ENCODE measurements at regions of chr3 and their contacts with region 1.

Region 1: DNA sequence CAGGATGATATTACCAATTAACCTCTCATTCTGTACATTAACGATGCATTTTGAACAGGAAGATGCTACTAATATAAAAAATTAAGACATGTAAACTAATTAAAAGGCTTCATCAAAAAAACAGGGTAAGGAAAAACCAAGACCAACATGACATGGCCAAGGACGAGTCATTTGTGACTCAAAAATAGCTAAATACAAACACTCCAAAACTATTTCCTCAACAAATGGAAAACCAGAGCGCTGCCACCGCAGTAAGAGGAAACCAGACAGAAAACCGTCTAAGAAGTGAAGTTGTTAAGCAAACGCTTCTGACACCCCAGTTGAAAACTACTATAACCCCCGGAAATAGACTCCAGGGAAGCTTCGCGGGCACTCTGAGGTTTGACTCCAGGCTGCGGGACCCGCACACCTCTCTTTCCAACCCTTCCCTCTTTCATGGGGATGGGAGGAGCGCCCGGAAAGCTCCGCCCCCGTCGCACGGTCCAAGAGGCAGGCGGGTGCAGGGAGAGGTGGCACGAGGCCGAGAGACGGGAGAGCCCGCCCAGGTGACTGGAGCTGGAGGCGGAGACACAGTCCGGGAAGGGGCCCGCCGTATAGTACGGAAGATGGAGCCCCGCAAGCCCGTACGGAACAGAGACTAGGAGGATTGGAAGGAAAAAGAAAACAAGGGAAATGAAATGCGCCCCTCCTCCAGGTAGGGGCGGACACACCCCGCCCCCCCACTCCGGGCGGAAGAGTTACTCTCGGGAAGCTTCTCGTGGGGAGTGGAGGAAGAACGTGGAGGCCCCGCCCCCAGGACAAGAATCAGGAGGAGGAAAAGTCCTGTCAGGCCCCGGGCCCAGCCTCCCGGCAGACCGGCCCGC is 708 bp downstream of the DCAF1 start:
- DNase-seq: peak; percentile 85
- H3K4me3 Mint-ChIP-seq: peak overlapping the region; percentile 88
- H3K27ac Mint-ChIP-seq: peak overlapping the region; percentile 95
- H3K4me1 Mint-ChIP-seq: peaks cover 21% of the 10 kb centered on the region
- H3K27me3 Mint-ChIP-seq: peaks cover 3% of the 10 kb centered on the region

Region 2: DNA sequence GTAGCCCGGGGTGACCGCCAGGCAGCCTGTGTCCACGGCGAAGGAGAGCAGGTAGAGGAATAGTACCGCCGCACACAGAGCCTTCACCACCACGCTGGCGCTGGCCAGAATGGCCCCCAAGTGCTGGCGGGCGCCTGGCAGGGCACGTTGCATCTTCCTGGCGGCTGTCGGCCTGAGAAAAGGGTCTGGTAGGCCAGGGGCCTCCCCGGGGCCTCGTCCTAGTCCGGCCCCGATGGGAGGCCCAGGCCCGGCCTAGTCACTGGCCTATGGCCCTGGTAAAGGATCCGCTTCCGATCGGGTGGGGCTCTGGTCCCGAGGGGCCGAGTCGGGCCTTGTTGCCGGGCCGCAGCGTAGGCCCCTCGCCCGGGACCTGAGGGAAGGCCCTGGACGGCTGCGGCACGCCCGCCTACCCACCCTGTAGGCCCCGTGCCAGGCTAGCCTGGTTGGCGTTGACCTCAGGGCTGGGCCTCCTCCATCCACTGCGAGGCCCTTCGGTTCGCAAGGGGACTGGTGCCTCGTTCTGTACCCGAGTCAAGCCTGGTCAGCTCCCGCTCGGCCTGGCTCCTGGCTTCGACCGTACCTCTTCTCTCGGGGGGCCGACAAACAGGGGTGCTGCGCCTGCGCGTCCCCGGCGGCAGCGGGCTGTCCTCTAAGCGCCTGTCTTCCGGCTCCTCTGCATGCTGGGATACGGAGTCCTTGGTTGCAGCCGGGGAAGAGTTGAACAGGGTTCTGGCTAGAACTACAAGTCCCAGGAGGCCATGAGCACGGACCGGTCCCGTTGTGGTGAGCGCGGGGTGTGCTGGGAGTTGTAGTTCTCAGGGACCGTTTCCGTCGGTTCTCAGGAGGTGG is 1140.0 kb before region 1 on chr3 and contains the start of gene TMEM115:
- intact Hi-C with region 1: loop called (anchors 1 kb)
- DNase-seq: peak; percentile 95
- H3K4me3 Mint-ChIP-seq: peak within 1 kb of the TSS; percentile 99
- H3K27ac Mint-ChIP-seq: peak within 1 kb of the TSS; percentile 96
- H3K4me1 Mint-ChIP-seq: peaks cover 43% of the 10 kb centered on the region
- H3K27me3 Mint-ChIP-seq: peaks cover 4% of the 10 kb centered on the region
- total RNA-seq, gene TMEM115: 23.6 and 25.4 TPM in 2 replicates

Region 3: GRCh38 chr3:50961386-50961785 is 537.7 kb before region 1 on chr3:
- intact Hi-C with region 1: no loop called
- DNase-seq: no peak
- H3K4me3 Mint-ChIP-seq: no peak overlapping the region
- H3K27ac Mint-ChIP-seq: no peak overlapping the region
- H3K4me1 Mint-ChIP-seq: no peaks in the 10 kb centered on the region
- H3K27me3 Mint-ChIP-seq: peaks cover 32% of the 10 kb centered on the region

Region 4: DNA sequence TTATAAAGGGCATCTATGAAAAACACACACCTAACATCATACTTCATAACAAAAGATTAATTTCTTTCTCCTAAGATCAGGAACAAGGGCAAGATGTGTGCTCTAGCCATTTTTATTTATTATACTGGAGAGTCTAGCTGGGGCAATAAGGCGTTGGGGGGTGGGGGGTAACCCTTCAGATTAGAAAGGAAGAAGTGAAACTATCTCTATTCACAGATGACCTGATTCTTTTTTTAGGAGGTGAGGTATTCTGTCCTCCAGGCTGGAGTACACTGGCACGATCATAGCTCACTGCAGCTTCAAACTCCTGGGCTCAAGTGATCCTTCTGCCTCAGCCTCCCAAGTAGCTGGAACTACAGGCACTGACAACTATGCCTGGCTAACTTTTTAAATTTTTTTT is 203.5 kb before region 1 on chr3:
- intact Hi-C with region 1: no loop called
- DNase-seq: no peak
- H3K4me3 Mint-ChIP-seq: no peak overlapping the region
- H3K27ac Mint-ChIP-seq: no peak overlapping the region
- H3K4me1 Mint-ChIP-seq: no peaks in the 10 kb centered on the region
- H3K27me3 Mint-ChIP-seq: peaks cover 7% of the 10 kb centered on the region

Region 5: DNA sequence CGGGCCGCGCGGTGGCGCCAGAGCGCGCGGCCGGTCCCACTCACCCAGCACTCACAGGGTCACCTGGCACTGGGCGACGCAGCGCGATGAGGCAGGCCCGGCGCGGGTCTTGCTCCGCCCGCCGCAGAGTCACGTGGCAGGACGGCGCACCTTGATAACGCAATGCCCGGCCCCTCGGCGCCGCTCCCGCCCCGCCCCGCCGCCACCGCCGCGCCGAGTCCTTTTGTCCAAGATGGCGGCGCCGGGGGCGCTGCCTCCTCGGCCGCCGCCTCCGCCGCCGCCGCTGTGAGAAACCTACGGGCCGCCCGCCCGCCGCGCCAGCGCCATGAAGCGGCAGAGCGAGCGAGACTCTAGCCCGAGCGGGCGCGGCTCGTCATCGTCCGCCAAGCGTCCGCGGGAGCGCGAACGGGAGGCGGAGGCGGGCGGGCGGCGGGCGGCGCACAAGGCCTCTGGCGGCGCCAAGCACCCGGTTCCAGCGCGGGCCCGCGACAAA is 108.0 kb before region 1 on chr3 and contains the start of gene RBM15B:
- intact Hi-C with region 1: loop called (anchors 1 kb)
- DNase-seq: peak; percentile 98
- H3K4me3 Mint-ChIP-seq: peak within 1 kb of the TSS; percentile 85
- H3K27ac Mint-ChIP-seq: peak within 1 kb of the TSS; percentile 86
- H3K4me1 Mint-ChIP-seq: peaks cover 66% of the 10 kb centered on the region
- H3K27me3 Mint-ChIP-seq: no peaks in the 10 kb centered on the region
- total RNA-seq, gene RBM15B: 38.5 and 39.6 TPM in 2 replicates

Region 6: DNA sequence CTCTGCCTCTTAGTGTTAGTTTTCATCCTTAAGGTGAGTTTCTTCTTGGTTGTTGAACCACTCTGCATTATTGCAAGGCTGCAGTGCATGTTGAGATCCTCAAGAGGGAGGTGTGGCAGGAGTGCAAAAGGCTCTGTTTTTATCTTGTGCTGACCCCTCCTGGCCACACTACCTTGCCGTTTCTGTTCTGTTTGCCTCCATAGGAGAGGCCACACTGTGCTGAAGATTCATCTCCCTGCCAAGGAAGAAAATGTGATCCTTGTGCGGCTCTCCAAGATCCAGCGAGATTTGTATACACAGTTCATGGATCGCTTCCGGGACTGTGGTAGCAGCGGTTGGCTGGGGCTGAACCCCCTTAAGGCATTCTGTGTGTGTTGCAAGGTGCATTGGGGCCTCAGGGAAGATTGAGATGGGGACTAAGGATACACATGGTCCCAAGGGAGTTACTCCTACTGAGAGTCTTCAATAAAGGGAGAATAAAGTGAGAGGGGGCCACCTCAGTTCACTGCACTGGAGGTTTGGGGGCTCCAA is 138.9 kb after region 1 on chr3:
- intact Hi-C with region 1: loop called (anchors 1 kb)
- DNase-seq: peak; percentile 11
- H3K4me3 Mint-ChIP-seq: no peak overlapping the region
- H3K27ac Mint-ChIP-seq: no peak overlapping the region
- H3K4me1 Mint-ChIP-seq: no peaks in the 10 kb centered on the region
- H3K27me3 Mint-ChIP-seq: no peaks in the 10 kb centered on the region

Region 7: GRCh38 chr3:51682079-51682478 is 183.0 kb after region 1 on chr3:
- intact Hi-C with region 1: loop called (anchors 1 kb)
- DNase-seq: peak; percentile 77
- H3K4me3 Mint-ChIP-seq: peak overlapping the region; percentile 71
- H3K27ac Mint-ChIP-seq: peak overlapping the region; percentile 86
- H3K4me1 Mint-ChIP-seq: peaks cover 94% of the 10 kb centered on the region
- H3K27me3 Mint-ChIP-seq: no peaks in the 10 kb centered on the region

Region 8: DNA sequence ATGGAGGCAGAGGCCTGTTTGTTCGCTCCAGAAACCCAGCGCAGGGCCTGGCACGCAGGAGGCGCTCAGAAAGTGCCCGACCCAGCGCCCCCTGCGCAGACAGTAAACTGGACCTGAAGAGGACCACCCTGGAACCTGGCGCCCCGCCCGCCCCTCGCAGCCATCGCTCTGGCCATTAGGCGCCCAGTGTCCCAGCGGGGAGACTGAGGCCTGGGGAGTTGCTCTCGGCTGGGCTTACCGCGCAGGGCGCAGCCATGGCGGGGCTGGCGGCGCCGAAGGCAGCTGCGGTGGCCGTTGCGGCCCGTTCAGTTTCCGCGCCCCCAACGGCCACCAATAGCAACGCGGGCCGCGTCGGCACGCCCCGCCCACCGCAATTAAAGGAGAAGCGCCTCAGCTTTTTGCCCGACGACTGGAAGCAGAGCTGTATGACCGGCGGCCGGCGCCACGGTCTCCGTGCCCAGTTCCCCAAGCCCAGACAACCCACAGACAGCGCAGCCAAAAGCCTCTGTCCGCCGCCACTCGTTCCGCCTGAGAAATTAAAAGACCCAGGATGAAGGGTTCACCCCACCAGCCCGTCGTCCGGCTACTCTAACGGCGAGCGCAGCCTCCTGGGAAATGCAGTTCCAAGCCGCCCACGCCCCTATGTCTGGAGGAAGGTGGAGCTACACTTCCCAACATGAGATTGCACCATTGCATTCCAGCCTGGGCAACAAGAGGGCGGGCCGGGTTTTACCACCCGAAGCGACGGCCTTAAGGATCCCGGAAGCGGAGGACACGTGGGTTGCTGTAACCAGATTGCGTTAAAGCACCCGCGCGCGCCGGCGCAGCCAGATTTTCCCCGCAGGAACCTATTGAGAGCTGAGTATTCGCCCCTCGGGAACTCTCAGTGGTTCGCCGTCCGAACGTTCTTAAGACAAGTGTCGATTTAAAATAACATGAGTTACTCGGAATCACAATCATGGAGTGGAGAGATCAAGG is 655.3 kb after region 1 on chr3 and contains the start of gene POC1A:
- intact Hi-C with region 1: loop called (anchors 1 kb)
- DNase-seq: peak; percentile 86
- H3K4me3 Mint-ChIP-seq: peak within 1 kb of the TSS; percentile 91
- H3K27ac Mint-ChIP-seq: peak within 1 kb of the TSS; percentile 95
- H3K4me1 Mint-ChIP-seq: peaks cover 25% of the 10 kb centered on the region
- H3K27me3 Mint-ChIP-seq: peaks cover 3% of the 10 kb centered on the region
- total RNA-seq, gene POC1A: 20.3 and 24.9 TPM in 2 replicates